SK-N-SH (cell line): ENCODE measurements at regions of chr5 and their contacts with region 1.

Region 1: DNA sequence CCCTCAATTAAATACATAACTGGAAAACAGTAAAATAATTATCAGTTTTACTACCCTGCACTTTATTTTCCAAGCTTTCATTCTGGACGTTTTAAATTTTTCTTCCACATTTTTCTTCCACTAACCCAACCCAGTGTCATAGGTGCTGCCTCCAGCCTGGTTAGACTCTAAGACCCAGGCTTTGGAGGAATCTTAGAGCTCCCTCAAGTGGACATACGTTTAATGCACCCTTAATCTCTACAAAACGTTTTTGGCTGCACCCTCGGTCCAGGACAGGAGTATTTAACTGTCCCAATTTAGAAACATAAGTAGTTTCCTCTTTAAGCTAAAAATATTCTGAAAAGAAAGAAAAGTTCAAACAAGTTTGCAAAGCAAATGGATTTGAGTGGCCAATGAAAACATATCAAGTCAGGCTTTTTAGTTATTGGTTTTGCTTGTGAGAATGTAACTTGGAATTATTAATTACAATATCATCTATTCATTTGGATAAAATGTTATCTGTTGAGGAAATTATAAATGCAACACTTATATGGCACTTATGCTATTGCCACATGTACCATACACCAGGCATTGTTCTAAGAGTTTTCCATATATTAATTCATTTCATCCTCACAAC is 38.9 kb downstream of the CDH6 start:
- DNase-seq: peak; percentile 36
- H3K4me3 ChIP-seq: no peak overlapping the region
- H3K27ac ChIP-seq: no peak overlapping the region
- H3K4me1 ChIP-seq: peaks cover 0 to 13% of the 10 kb centered on the region in 2 experiments; a peak in 1 of 4 replicates
- H3K27me3 ChIP-seq: no peaks in the 10 kb centered on the region
- CTCF ChIP-seq: peak; percentile 76
- EP300 ChIP-seq: no peak
- RAD21 ChIP-seq: peak; percentile 74

Region 2: DNA sequence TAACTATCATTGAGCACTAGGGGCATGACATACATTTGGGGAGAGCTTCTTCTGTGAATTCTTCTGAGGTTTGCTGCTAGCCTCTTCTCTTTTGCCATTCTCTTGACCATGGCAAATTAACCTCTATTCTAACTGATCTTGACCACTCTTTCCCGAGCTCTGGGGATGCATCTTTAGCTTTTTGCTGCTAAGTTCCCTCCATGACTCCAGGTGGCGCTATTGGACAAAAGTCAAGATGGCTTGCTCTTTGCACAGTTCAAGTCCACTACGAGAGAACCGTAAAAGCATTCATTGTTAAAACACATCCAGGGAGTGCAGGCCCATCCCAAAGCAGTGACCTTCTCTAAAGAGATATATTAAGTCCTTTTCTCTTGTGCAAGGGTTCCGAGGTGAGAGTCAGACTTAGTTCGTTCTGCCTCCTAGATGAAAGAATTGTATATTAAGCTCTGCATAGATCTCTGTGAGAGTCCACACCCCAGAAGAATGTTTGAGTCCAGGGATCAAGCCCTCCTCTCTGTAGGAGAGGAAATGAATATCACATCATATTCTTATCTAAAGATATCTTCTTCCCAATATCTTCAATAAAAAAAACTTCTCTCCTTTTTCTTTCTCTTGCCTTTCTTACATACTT is 1191.8 kb before region 1 on chr5:
- CTCF ChIA-PET with region 1: interaction called, 15 read pairs
- POLR2A ChIA-PET with region 1: no interaction called
- DNase-seq: peak; percentile 50
- H3K4me3 ChIP-seq: no peak overlapping the region; a peak in 1 of 4 replicates
- H3K27ac ChIP-seq: no peak overlapping the region
- H3K4me1 ChIP-seq: peaks cover 0 to 4% of the 10 kb centered on the region in 2 experiments; a peak in 1 of 4 replicates
- H3K27me3 ChIP-seq: no peaks in the 10 kb centered on the region
- CTCF ChIP-seq: peak; percentile 81
- EP300 ChIP-seq: no peak
- RAD21 ChIP-seq: peak; percentile 82

Region 3: GRCh38 chr5:31186672-31187267 is 45.6 kb before region 1 on chr5:
- CTCF ChIA-PET with region 1: interaction called, 16 read pairs
- POLR2A ChIA-PET with region 1: no interaction called
- DNase-seq: peak; percentile 37
- H3K4me3 ChIP-seq: no peak overlapping the region
- H3K27ac ChIP-seq: no peak overlapping the region
- H3K4me1 ChIP-seq: no peaks in the 10 kb centered on the region
- H3K27me3 ChIP-seq: peaks cover 6% of the 10 kb centered on the region
- CTCF ChIP-seq: peak; percentile 84
- EP300 ChIP-seq: no peak
- RAD21 ChIP-seq: peak; percentile 50

Region 4: DNA sequence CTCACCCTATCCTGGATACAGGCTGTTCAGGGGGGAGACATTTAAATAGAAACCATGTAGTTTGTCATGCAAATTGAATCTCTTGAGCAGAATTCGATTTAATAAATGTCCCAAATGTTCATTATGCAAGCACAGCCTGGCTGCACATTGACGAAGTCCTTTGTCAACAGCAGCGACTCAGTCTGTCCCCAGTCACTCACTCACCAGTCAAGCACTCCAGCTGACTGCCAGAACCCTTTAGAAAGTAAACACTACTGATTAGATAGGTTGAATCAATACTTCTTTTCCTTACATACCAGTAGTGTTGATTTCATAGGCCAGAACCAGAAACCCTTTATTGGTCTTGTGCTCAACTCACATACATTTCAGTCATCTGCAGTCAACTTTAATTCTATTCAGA is 11.4 kb before region 1 on chr5:
- CTCF ChIA-PET with region 1: interaction called, 16 read pairs
- POLR2A ChIA-PET with region 1: no interaction called
- DNase-seq: no peak
- H3K4me3 ChIP-seq: no peak overlapping the region
- H3K27ac ChIP-seq: no peak overlapping the region
- H3K4me1 ChIP-seq: no peaks in the 10 kb centered on the region
- H3K27me3 ChIP-seq: no peaks in the 10 kb centered on the region
- CTCF ChIP-seq: no peak
- EP300 ChIP-seq: no peak
- RAD21 ChIP-seq: no peak

Region 5: GRCh38 chr5:31251032-31251431 is 18.7 kb after region 1 on chr5:
- CTCF ChIA-PET with region 1: interaction called, 13 read pairs
- POLR2A ChIA-PET with region 1: no interaction called
- DNase-seq: no peak
- H3K4me3 ChIP-seq: no peak overlapping the region
- H3K27ac ChIP-seq: no peak overlapping the region
- H3K4me1 ChIP-seq: peaks cover 0 to 7% of the 10 kb centered on the region in 2 experiments; a peak in 3 of 4 replicates
- H3K27me3 ChIP-seq: no peaks in the 10 kb centered on the region
- CTCF ChIP-seq: no peak
- EP300 ChIP-seq: no peak
- RAD21 ChIP-seq: no peak

Region 6: DNA sequence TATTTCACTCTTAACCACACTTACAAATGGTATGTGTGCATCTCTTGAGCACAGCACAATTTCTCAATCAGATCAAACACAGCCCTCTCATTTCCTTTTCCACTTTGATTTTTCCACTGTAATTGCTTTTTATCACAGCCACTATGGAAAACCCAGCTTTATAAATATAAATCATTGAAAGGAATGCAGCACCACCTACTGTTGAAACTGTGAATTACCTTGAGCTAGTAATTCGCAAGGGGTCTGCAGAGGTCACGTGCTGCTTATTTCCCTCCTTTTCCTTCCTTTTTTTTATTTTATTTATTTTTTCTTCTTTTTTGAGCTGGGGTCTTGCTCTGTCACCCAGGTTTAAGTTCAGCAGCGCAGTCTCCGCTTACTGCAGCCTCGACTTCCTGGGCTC is 38.0 kb after region 1 on chr5:
- CTCF ChIA-PET with region 1: interaction called, 23 read pairs
- POLR2A ChIA-PET with region 1: no interaction called
- DNase-seq: peak; percentile 30
- H3K4me3 ChIP-seq: no peak overlapping the region; a peak in 1 of 4 replicates
- H3K27ac ChIP-seq: no peak overlapping the region
- H3K4me1 ChIP-seq: peaks cover 0 to 5% of the 10 kb centered on the region in 2 experiments; a peak in 1 of 4 replicates
- H3K27me3 ChIP-seq: no peaks in the 10 kb centered on the region
- CTCF ChIP-seq: peak; percentile 66
- EP300 ChIP-seq: no peak
- RAD21 ChIP-seq: peak; percentile 68

Region 7: GRCh38 chr5:31435730-31436129 is 203.3 kb after region 1 on chr5:
- CTCF ChIA-PET with region 1: no interaction called
- POLR2A ChIA-PET with region 1: no interaction called
- DNase-seq: no peak
- H3K4me3 ChIP-seq: no peak overlapping the region
- H3K27ac ChIP-seq: no peak overlapping the region
- H3K4me1 ChIP-seq: peaks cover 0 to 2% of the 10 kb centered on the region in 2 experiments; a peak in 2 of 4 replicates
- H3K27me3 ChIP-seq: no peaks in the 10 kb centered on the region
- CTCF ChIP-seq: no peak
- EP300 ChIP-seq: no peak
- RAD21 ChIP-seq: no peak